PC-9 (cell line): ENCODE measurements at regions of chr22 and their contacts with region 1.

Region 1: DNA sequence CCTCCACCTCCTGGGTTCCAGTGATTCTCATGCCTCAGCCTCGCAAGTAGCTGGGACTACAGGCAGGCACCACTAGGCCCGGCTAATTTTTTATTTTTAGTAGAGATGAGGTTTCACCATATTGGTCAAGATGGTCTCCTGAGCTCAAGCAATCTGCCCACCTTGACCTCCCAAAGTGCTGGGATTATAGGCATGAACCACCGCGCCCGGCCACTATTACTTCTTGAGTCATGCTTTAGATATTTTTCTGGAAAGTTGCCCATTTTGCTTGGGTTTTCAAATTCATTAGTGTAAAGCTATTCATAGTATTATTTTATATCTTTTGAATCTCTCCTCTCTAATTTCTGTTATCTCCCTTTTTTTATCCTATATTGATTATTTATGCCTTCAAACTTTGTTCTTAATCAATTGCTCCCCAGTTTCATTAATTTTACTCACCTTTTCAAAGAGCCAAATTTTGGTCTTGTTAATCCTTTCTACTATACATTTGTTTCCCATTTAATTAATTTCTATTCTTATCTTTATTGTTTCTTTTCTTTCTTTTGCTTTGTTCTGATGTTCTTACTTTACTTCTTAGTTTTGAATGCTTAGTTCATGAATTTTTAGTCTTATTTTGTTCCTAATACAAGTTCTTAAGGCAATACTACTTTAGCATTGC is 10.3 kb upstream of the RAC2 start:
- DNase-seq: peak; percentile 57 to 76
- H3K4me3 ChIP-seq: peak overlapping the region; percentile 8; the same call in 1 of the 2 replicates
- H3K27ac ChIP-seq: peak overlapping the region; percentile 52
- H3K4me1 ChIP-seq: peaks cover 43% of the 10 kb centered on the region
- H3K27me3 ChIP-seq: no peaks in the 10 kb centered on the region
- CTCF ChIP-seq: no peak

Region 2: GRCh38 chr22:37229805-37230672 is 24.3 kb before region 1 on chr22:
- CTCF ChIA-PET with region 1: interaction called, 8 read pairs
- POLR2A ChIA-PET with region 1: no interaction called
- intact Hi-C with region 1: loop called (anchors 2 kb)
- DNase-seq: peak; percentile 67 to 75
- H3K4me3 ChIP-seq: no peak overlapping the region
- H3K27ac ChIP-seq: peak overlapping the region; percentile 83
- H3K4me1 ChIP-seq: peaks cover 33% of the 10 kb centered on the region
- H3K27me3 ChIP-seq: no peaks in the 10 kb centered on the region
- CTCF ChIP-seq: no peak

Region 3: GRCh38 chr22:37244114-37244921 is 10.0 kb before region 1 on chr22 and contains the start of gene RAC2:
- CTCF ChIA-PET with region 1: interaction called, 8 read pairs
- POLR2A ChIA-PET with region 1: interaction called, 38 read pairs
- intact Hi-C with region 1: no loop called
- DNase-seq: peak; percentile 74 to 76
- H3K4me3 ChIP-seq: peak within 1 kb of the TSS; percentile 63
- H3K27ac ChIP-seq: no peak within 1 kb of the TSS
- H3K4me1 ChIP-seq: peaks cover 17% of the 10 kb centered on the region
- H3K27me3 ChIP-seq: no peaks in the 10 kb centered on the region
- CTCF ChIP-seq: no peak
- total RNA-seq, gene RAC2: 79.9 and 90.5 TPM in 2 replicates